GM10248 (cell line): ENCODE measurements at regions of chr19 and their contacts with region 1.

Region 1: DNA sequence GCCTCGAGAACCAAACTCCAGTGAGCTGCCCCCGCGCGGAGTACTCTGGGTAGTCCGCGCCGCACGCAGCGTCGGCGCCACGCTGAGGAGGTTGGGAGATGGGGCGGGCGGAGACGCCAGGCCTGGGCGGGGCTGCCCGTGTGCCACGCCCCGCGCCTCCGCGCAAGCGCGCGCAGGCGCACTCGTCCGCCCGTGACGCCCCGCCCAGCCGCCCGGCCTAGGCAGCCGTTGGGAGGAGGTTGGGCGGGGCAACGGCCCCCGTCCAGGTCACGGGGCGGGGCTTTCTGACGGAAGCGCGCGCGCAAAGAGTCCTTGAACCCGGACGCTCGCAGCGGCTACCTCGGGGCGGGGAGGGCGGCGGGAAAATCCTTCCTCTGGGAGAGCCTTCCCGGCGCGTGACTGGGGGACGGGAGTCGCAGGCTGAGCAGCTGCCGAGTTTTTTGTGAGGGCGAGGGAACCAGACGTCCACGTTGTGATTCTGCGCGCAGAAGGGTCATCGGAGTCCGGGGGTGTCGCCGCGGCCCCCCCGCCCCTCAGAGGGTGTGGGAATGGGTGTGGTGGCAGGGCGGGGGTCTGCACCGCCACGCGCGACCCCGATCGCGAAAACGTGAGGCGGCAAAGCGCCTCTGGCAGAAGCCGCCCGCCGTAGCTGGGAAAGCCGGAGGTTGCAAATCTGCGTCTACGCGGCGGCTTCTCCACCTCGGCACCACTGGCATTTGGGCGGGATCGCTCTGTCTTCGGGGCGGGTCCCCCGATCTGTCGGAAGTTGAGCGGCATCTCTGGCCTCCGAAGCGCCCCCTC is at the start of gene MED26:
- DNase-seq: peak; percentile 99
- CTCF ChIP-seq: peak; percentile 26

Region 2: GRCh38 chr19:16659831-16660708 is 31.7 kb after region 1 on chr19 and contains the start of gene SMIM7:
- CTCF ChIA-PET with region 1: no interaction called
- POLR2A ChIA-PET with region 1: interaction called, 14 read pairs
- DNase-seq: peak; percentile 99
- CTCF ChIP-seq: peak; percentile 40